ENCODE measurements at regions of chr9 and their contacts with region 1.

Region 1: GRCh38 chr9:114914139-114914538 is 16.3 kb downstream of the TNFSF8 start:
- DNase-seq: no peak
- H3K4me3 ChIP-seq: no peak overlapping the region
- CTCF ChIP-seq: peak; percentile 22

Region 2: DNA sequence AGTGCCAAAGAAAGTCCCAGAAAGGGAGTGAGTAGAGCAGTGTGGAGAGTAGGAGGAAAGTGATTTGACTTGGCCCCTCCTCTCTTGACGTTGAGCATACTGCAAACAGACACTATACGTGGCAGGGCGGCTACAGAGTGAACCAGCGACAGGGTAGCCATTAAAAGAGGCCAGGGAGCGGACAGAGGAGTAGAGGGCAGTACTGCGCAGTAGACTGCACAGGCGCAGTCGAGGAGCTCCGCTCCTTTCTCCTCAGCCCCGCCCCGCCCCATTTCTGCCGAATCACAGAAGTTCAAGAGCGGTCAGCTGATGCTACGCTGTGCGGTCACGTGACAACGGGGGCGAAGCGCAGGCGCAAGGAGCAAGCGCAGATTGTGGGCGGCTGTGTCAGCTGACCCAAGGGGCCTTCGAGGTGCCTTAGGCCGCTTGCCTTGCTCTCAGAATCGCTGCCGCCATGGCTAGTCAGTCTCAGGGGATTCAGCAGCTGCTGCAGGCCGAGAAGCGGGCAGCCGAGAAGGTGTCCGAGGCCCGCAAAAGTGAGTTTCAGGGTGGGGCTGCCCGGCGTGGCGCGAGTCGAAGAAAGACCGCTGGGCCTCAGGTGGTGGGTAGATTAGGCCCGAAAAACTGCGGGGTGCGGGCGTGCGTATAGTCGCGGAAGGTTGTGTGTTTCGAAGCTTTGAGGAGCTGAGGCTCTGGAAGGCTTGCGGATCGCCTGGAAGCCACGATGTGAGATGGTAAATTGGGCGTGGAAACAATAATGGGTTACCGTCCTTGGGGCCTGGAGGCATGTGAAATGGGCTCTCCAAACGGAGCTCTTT is 326.5 kb before region 1 on chr9 and contains the start of gene ATP6V1G1:
- CTCF ChIA-PET with region 1: no interaction called
- POLR2A ChIA-PET with region 1: no interaction called
- DNase-seq: peak; percentile 94
- H3K4me3 ChIP-seq: peak within 1 kb of the TSS; percentile 99
- CTCF ChIP-seq: peak; percentile 29

Region 3: GRCh38 chr9:114925672-114926071 is 11.5 kb after region 1 on chr9:
- CTCF ChIA-PET with region 1: interaction called, 31 read pairs
- POLR2A ChIA-PET with region 1: no interaction called
- DNase-seq: no peak
- H3K4me3 ChIP-seq: no peak overlapping the region
- CTCF ChIP-seq: no peak

Region 4: DNA sequence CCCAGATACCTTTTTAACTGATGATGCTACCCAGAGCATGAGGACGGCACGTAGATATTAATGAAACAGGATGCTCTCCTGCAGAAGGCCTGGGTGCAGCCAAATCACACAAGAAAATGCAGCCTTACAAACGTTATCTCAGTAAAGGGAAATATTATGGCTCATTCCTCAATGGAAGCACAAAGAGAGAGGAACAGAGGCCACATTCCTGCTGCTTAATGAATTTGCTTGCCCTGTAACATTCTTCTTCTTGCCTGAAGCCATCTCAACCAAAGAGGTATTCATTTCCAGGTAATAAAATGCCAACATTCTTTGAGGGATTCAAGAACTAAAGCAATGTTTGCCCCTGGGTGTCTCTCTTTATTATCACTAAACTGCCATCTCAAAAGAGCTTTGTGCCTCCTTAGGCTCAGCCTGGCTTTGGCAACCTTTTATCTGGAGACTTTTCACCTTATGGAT is 110.9 kb after region 1 on chr9:
- CTCF ChIA-PET with region 1: no interaction called
- POLR2A ChIA-PET with region 1: no interaction called
- DNase-seq: no peak
- H3K4me3 ChIP-seq: no peak overlapping the region
- CTCF ChIP-seq: no peak

Region 5: GRCh38 chr9:115250621-115251032 is 336.5 kb after region 1 on chr9:
- CTCF ChIA-PET with region 1: no interaction called
- POLR2A ChIA-PET with region 1: no interaction called
- DNase-seq: peak; percentile 94
- H3K4me3 ChIP-seq: no peak overlapping the region
- CTCF ChIP-seq: no peak